ENCODE measurements at regions of chr18 and their contacts with region 1.

Region 1: DNA sequence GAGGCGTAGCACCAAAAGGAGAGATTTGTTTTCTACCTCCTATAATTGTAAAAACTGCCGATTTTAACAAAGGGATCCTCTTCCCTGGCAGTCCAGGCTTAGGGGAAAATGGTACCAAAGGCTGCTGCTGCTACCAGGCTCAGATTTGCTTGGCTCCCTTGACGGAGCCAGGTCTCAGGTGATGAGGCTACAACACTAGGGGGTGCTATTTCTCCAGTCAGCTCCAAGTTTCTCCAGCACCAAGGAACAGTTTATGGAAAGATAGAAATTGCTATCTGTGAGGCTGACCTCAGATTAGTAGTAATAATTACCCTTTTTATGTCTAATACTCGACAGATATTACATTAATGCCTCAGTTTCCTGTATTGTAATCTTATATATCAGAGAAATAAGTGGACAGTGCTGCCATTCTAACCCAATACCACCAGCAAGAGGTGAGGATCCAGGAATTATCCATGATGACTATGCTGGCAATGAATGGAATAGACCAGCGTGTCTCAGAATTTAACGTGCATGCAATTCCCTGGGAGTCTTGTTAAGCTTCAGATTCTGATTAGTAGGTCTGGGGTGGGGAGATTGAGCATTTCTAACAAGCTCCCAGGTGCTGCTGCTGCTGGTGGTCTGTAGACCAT is 111.3 kb downstream of the ESCO1 start:
- DNase-seq: peak in 4 of 5 donors; percentile 7 to 21 (median 19)
- H3K4me3 ChIP-seq: no peak overlapping the region
- H3K4me3 Mint-ChIP-seq: no peak overlapping the region
- H3K27ac ChIP-seq: no peak overlapping the region
- H3K27ac Mint-ChIP-seq: no peak overlapping the region
- H3K4me1 ChIP-seq: no peaks in the 10 kb centered on the region
- H3K4me1 Mint-ChIP-seq: no peaks in the 10 kb centered on the region
- H3K27me3 ChIP-seq: no peaks in the 10 kb centered on the region
- H3K27me3 Mint-ChIP-seq: peaks cover 7 to 10% of the 10 kb centered on the region in 2 donors

Region 2: DNA sequence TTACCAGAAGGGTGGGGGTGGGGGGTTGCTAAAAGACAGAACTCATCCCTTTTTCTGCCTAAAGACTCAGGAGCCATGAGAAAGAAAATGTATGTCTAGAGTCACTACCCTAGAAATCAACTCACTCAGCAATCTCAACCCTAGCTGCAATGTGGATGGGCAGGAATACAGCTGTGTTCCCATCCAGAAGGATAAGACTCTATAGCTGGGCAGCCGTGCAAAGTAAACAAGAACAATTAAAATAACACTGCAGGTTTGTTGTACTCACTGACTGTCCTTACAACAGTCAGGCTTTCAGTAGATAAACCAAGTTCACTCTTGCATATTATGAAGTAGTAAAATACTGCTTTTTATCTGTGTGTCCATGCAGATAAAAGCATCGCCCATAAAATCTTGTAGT is 37.2 kb after region 1 on chr18:
- CTCF ChIA-PET with region 1: no interaction called
- POLR2A ChIA-PET with region 1: no interaction called
- intact Hi-C with region 1: no loop called
- DNase-seq: no peak
- H3K4me3 ChIP-seq: no peak overlapping the region
- H3K4me3 Mint-ChIP-seq: no peak overlapping the region
- H3K27ac ChIP-seq: no peak overlapping the region
- H3K27ac Mint-ChIP-seq: peak overlapping the region in 3 of 7 donors; percentile 46 to 61 (median 47)
- H3K4me1 ChIP-seq: no peaks in the 10 kb centered on the region
- H3K4me1 Mint-ChIP-seq: peaks cover 0 to 4% (median 2%) of the 10 kb centered on the region in 4 donors
- H3K27me3 ChIP-seq: no peaks in the 10 kb centered on the region
- H3K27me3 Mint-ChIP-seq: no peaks in the 10 kb centered on the region

Region 3: DNA sequence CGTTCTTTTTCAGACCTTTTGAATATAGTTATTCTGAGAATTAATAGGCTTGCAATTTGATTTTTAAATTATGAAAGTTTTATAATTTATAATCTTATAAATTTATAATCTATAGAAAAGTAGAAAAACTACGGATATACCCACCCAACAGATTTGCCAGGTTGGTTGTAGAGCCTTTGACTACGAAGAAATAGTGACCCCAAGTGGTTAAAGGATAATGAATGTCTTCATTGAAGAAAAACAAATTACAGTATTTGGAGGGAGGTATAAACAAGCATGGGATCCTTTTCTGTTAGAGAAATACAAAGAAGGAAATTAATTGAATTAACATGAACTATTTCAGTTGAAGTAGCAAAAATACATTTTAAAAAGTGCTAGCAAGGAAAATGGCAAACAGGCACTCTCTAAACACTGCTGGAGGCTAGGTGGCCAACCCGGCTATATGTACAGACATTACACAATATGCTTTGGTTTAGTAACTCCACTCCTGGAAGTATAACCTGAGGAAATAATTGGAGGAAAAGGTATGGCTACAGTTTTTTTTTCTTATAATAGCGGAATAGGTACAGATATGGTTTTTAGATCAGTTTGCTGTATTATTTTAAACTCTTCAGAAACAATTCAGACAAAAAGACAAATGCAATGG is 362.2 kb after region 1 on chr18:
- CTCF ChIA-PET with region 1: interaction called, 3 read pairs
- POLR2A ChIA-PET with region 1: no interaction called
- intact Hi-C with region 1: loop called (anchors 1 kb)
- DNase-seq: peak in 1 of 5 donors; percentile 4
- H3K4me3 ChIP-seq: no peak overlapping the region
- H3K4me3 Mint-ChIP-seq: no peak overlapping the region
- H3K27ac ChIP-seq: no peak overlapping the region
- H3K27ac Mint-ChIP-seq: peak overlapping the region in 1 of 7 donors; percentile 35
- H3K4me1 ChIP-seq: no peaks in the 10 kb centered on the region
- H3K4me1 Mint-ChIP-seq: peaks cover 0 to 6% (median 5%) of the 10 kb centered on the region in 4 donors
- H3K27me3 ChIP-seq: no peaks in the 10 kb centered on the region
- H3K27me3 Mint-ChIP-seq: no peaks in the 10 kb centered on the region

Region 4: DNA sequence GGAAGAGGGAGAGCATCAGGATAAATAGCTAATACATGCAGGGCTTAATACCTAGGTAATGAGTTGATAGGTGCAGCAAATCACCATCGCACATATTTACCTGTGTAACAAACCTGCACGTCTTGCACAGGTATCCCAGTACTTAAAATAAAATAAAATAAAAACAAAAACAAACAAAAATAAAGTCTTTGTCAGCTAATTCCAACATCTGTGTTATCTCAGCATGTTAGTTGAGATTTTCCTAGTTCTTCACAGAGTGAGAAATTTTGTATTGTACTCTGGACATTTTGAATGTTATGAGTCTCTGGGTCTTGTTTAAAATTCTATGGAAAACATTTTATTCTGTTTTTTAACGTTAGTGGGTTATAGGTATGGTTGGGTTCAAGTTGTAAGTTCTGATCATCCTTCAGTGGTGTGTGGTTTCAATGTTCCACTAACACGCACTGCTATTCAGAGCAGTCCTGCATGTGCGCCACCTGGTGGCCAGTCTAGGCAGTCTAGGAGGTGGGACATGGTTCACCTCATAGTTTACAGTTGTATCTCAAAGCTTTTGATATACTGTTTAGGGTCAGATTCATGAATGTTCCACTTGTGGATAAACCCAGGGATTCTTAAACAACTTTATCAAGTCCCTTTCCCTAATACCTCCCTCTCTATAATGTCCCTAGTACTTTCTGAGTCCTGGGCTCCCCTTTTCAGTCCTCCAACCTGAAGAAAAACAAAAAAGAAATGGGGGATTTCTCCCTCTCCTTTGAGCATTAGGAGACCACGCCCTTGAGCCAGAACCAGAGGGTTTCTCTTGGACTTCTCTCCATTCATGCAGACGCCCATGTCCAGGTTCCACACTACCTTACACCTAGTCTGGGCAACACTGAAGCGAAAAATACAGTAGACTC is 466.8 kb after region 1 on chr18:
- CTCF ChIA-PET with region 1: interaction called, 10 read pairs
- POLR2A ChIA-PET with region 1: no interaction called
- intact Hi-C with region 1: loop called (anchors 1 kb)
- DNase-seq: peak; percentile 61 to 67 (median 65)
- H3K4me3 ChIP-seq: no peak overlapping the region
- H3K4me3 Mint-ChIP-seq: no peak overlapping the region
- H3K27ac ChIP-seq: no peak overlapping the region
- H3K27ac Mint-ChIP-seq: no peak overlapping the region
- H3K4me1 ChIP-seq: no peaks in the 10 kb centered on the region
- H3K4me1 Mint-ChIP-seq: no peaks in the 10 kb centered on the region
- H3K27me3 ChIP-seq: no peaks in the 10 kb centered on the region
- H3K27me3 Mint-ChIP-seq: peaks cover 12 to 26% of the 10 kb centered on the region in 2 donors